Testis (tissue), 5 donors: ENCODE measurements at regions of chr10 and their contacts with region 1.

Region 1: GRCh38 chr10:87094373-87095235 is at the starts of genes GLUD1 and SHLD2:
- DNase-seq: peak; percentile 92
- H3K4me3 ChIP-seq: peak within 1 kb of the TSS; percentile 88 to 92
- H3K27ac ChIP-seq: peak within 1 kb of the TSS; percentile 92 to 97
- H3K4me1 ChIP-seq: peaks cover 10% of the 10 kb centered on the region
- H3K27me3 ChIP-seq: no peaks in the 10 kb centered on the region
- CTCF ChIP-seq: peak in 1 of 3 experiments; percentile 2
- POLR2A ChIP-seq: no peak
- total RNA-seq, gene GLUD1: 62.5 to 64.4 TPM
- total RNA-seq, gene SHLD2: 16.9 to 19.1 TPM

Region 2: DNA sequence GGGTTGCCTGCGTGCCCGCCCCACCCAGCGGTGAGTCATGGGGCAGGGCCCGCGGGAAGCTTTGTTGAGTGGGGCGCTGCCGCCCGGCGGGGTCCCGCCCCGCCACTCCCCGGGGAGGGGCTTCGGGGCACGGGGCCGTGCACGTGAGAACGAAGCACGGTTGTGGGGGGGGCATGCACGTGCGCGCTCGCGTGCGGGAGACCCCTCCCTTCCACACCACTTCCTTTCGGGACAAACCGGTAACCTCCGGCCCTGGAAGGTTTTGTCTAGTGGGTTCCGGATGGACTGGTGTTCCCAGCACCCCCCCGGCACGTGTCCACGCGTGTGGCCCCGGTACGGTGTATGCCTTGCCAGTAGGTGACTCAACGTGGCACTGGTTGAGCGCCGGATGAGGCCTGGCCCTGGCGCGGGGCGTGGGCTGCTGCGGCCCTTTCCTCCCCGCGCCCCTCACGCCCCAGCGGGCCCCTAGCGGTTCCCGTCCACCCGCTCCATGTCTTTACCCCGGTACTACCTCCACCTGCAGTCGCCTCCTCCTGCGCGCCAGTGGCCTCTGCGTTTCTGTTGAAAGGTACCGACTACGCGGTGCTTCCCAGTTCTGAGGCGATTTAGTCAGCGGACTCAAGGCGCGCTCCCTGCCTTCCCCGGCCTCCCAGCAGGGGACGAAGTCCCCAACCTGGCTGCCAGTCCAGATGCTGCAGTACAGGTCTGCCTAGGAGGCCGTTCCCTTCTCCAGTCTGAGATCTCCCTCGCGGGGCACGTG is 123.2 kb before region 1 on chr10:
- intact Hi-C with region 1: loop called (anchors 10 kb)
- DNase-seq: peak; percentile 90
- H3K4me3 ChIP-seq: peak overlapping the region; percentile 66 to 80
- H3K27ac ChIP-seq: peak overlapping the region; percentile 86 to 98
- H3K4me1 ChIP-seq: peaks cover 31% of the 10 kb centered on the region
- H3K27me3 ChIP-seq: no peaks in the 10 kb centered on the region
- CTCF ChIP-seq: peak in 1 of 3 experiments; percentile 37
- POLR2A ChIP-seq: no peak